ENCODE measurements at regions of chr5 and their contacts with region 1.

Region 1: DNA sequence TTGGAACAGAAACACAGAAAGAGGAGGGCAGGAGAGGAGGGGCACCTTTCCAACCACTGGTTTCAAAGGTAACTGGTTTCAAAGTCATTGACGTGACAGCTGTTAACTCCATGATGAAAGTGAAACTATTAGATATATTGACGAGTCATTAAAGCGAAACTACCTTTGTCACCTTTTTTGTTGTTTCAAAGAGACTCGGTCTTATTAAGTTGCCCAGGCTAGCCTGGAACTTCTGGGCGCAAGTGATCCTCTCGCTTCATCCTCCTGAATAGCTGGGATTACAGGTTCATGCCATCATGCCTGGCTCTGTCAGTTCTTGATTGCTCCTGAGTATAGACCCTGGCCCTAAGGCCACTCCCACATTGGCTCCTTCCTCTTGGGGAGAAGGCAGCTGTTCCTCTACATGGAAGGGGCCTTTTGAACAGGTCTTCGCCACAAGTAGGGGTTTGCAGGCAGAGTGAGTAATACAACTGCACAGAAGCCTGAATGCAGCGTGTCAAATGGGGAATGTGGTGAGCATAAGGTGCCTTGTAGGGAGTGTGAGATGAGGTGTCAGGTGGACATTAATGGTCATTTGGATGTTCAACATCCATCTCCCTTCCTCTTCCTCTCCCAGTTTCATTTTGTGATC is 3.4 kb upstream of the F12 start:
- DNase-seq: peak in 2 of 9 experiments; percentile 64 to 81
- ATAC-seq: peak; percentile 55
- H3K4me3 ChIP-seq: peak overlapping the region in 1 of 2 experiments; percentile 32
- H3K4me3 Mint-ChIP-seq: peak overlapping the region; percentile 72
- H3K27ac ChIP-seq: peak overlapping the region in 1 of 2 experiments; percentile 75
- H3K27ac Mint-ChIP-seq: peak overlapping the region; percentile 79
- H3K4me1 ChIP-seq: peaks cover 17% of the 10 kb centered on the region
- H3K4me1 Mint-ChIP-seq: peaks cover 37% of the 10 kb centered on the region
- H3K27me3 ChIP-seq: no peaks in the 10 kb centered on the region
- H3K27me3 Mint-ChIP-seq: no peaks in the 10 kb centered on the region
- CTCF ChIP-seq: no peak

Region 2: DNA sequence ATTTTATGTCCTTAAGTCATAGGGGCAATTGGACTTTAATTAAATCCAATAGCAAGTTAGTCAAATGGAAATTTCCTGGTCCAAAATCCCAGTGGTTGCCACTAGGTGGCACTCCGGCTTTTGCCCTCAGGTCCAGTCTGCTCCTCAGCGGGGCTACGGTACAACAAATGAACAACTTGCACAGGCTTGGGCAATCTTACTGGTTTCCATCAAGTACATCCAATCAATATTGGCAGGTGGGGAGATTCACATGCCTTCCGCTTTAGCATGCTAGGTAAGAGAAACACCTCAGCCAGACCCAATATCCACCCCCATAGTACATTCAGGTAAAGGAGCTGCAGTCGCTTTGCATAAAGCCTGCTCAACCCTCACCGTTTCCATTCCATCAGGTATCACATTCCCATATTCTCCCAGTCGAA is 94.8 kb before region 1 on chr5:
- CTCF ChIA-PET with region 1: interaction called, 10 read pairs
- POLR2A ChIA-PET with region 1: no interaction called
- intact Hi-C with region 1: no loop called
- DNase-seq: peak; percentile 52 to 85 (median 75)
- ATAC-seq: peak; percentile 81
- H3K4me3 ChIP-seq: no peak overlapping the region
- H3K4me3 Mint-ChIP-seq: no peak overlapping the region
- H3K27ac ChIP-seq: no peak overlapping the region
- H3K27ac Mint-ChIP-seq: no peak overlapping the region
- H3K4me1 ChIP-seq: peaks cover 10% of the 10 kb centered on the region
- H3K4me1 Mint-ChIP-seq: peaks cover 14% of the 10 kb centered on the region
- H3K27me3 ChIP-seq: no peaks in the 10 kb centered on the region
- H3K27me3 Mint-ChIP-seq: no peaks in the 10 kb centered on the region
- CTCF ChIP-seq: peak; percentile 90

Region 3: DNA sequence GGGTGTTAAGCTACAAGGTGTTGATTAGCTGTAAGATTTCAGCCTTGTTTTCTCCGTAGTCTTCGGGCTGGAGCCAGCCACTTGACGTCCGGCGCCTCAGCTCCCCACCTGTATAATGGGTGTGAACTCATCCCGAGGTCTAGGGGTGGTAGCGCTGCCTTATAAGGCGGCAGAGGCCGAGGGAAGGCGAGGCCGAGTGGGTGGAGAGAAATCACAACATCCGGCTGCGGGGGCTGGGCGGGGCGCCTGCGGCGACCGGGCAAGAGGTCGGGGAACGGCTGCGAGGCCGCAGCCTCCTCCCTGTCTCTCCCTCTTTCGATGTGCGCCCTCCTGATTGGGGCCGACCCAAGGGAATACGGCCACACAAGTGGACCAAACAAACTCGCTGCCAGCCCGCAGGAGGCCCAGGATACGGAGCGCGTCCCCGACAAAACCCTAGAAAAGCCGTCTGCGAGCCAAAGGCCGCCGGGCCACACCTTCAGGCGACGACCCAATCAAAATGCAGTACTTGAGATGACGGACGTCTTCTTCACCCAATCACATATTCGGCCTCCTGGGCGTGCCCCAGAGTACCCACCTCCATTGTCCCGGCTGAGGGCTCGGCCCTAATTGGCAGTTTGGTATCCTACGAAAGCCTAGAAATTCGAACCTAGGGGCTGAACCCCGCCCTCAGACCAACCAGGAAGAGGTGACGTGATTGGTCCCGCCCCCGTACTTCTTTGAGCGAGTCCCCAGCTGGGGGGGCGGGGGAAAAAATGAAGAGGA is 13.3 kb after region 1 on chr5:
- CTCF ChIA-PET with region 1: interaction called, 222 read pairs
- POLR2A ChIA-PET with region 1: interaction called, 18 read pairs
- intact Hi-C with region 1: no loop called
- DNase-seq: peak; percentile 99 to 100 (median 99)
- ATAC-seq: peak; percentile 80
- H3K4me3 ChIP-seq: peak overlapping the region; percentile 63 to 65
- H3K4me3 Mint-ChIP-seq: peak overlapping the region; percentile 91
- H3K27ac ChIP-seq: peak overlapping the region; percentile 86 to 92
- H3K27ac Mint-ChIP-seq: peak overlapping the region; percentile 98
- H3K4me1 ChIP-seq: peaks cover 46% of the 10 kb centered on the region
- H3K4me1 Mint-ChIP-seq: peaks cover 53% of the 10 kb centered on the region
- H3K27me3 ChIP-seq: no peaks in the 10 kb centered on the region
- H3K27me3 Mint-ChIP-seq: no peaks in the 10 kb centered on the region
- CTCF ChIP-seq: no peak

Region 4: DNA sequence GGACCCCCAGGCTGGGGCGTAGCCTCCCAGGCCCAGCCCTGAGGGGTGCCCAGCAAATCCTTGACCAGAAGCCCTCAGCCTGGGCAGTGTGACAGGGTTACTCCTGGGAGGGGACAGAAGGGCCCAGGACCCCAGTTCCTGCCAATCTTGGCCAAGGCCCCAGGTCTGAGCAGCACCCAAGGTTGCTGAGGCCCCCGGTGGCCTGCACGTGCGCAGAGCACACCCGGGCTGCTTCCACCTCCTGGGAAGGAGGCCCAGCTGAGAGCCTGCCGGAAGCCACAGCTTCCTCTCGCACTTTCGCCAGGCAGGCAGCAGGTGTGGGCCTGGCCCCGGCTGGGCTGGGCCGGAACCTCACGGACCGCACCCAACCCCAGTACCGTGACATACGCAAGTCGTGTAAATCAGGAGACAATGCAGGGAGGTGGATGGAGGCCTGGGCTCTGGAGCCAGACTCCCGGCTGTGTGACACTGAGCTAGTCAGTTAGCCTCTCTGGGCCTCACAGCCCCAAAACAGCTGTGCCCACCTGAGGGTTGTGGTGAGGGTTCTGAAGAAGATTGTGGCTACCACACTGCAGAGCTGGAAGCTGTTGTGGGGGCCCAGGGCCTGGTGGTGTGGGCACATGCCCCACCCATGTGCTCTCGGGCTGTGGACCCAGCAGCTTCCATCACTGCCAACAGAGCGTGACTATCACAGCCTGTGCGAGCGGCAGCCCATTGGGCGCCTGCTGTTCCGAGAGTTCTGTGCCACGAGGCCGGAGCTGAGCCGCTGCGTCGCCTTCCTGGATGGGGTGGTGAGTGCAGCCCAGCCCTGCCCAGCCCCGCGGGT is 18.8 kb after region 1 on chr5:
- CTCF ChIA-PET with region 1: interaction called, 628 read pairs
- POLR2A ChIA-PET with region 1: interaction called, 18 read pairs
- intact Hi-C with region 1: no loop called
- DNase-seq: peak in 8 of 9 experiments; percentile 59 to 93 (median 78)
- ATAC-seq: peak; percentile 44
- H3K4me3 ChIP-seq: peak overlapping the region; percentile 37 to 98
- H3K4me3 Mint-ChIP-seq: peak overlapping the region; percentile 91
- H3K27ac ChIP-seq: peak overlapping the region; percentile 69 to 89
- H3K27ac Mint-ChIP-seq: peak overlapping the region; percentile 91
- H3K4me1 ChIP-seq: peaks cover 91% of the 10 kb centered on the region
- H3K4me1 Mint-ChIP-seq: peaks cover 66% of the 10 kb centered on the region
- H3K27me3 ChIP-seq: no peaks in the 10 kb centered on the region
- H3K27me3 Mint-ChIP-seq: no peaks in the 10 kb centered on the region
- CTCF ChIP-seq: no peak

Region 5: GRCh38 chr5:177446200-177447065 is 33.7 kb after region 1 on chr5 and contains the start of gene PRR7:
- CTCF ChIA-PET with region 1: interaction called, 628 read pairs
- POLR2A ChIA-PET with region 1: interaction called, 185 read pairs
- intact Hi-C with region 1: no loop called
- DNase-seq: peak; percentile 51 to 93 (median 75)
- ATAC-seq: peak; percentile 54
- H3K4me3 ChIP-seq: peak within 1 kb of the TSS; percentile 56 to 61
- H3K4me3 Mint-ChIP-seq: peak within 1 kb of the TSS; percentile 79
- H3K27ac ChIP-seq: peak within 1 kb of the TSS; percentile 61 to 84
- H3K27ac Mint-ChIP-seq: peak within 1 kb of the TSS; percentile 95
- H3K4me1 ChIP-seq: peaks cover 33% of the 10 kb centered on the region
- H3K4me1 Mint-ChIP-seq: peaks cover 44% of the 10 kb centered on the region
- H3K27me3 ChIP-seq: no peaks in the 10 kb centered on the region
- H3K27me3 Mint-ChIP-seq: no peaks in the 10 kb centered on the region
- CTCF ChIP-seq: no peak
- total RNA-seq, gene PRR7: 21.0 TPM

Measured in CD8-positive, alpha-beta T cell (primary cell).